Mammary epithelial cell (primary cell): ENCODE measurements at regions of chr1 and their contacts with region 1.

Region 1: GRCh38 chr1:55893155-55893554 is 678.0 kb upstream of the USP24 start:
- DNase-seq: peak; percentile 55
- H3K4me3 ChIP-seq: no peak overlapping the region
- H3K27ac ChIP-seq: no peak overlapping the region
- H3K4me1 ChIP-seq: no peaks in the 10 kb centered on the region
- H3K27me3 ChIP-seq: no peaks in the 10 kb centered on the region
- CTCF ChIP-seq: peak; percentile 43 to 59

Region 2: DNA sequence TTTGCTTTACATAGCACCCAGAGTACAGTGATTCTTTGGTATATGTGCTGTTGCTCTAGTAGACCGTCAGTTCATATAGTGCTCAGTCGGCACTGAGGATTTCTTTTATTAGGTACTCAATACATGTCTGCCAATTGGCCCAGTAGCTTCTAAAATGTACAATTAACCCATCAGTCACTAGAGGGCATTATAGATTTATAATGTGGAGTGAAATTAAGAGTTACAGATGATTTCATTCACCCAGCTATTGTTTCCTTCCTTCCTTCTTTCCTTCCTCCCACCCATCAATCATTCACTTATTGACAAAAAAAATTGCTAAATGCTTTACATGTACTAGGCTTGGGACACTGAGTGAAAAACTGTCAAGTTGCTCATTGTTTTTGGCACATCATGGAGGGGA is 414.4 kb before region 1 on chr1:
- CTCF ChIA-PET with region 1: no interaction called
- dilution Hi-C with region 1: no loop called
- in situ Hi-C with region 1: loop called in 1 of 2 experiments (anchors 25 kb)
- intact Hi-C with region 1: loop called (anchors 1 kb)
- DNase-seq: peak; percentile 21
- H3K4me3 ChIP-seq: no peak overlapping the region
- H3K27ac ChIP-seq: no peak overlapping the region
- H3K4me1 ChIP-seq: peaks cover 3% of the 10 kb centered on the region
- H3K27me3 ChIP-seq: no peaks in the 10 kb centered on the region
- CTCF ChIP-seq: peak; percentile 43

Region 3: DNA sequence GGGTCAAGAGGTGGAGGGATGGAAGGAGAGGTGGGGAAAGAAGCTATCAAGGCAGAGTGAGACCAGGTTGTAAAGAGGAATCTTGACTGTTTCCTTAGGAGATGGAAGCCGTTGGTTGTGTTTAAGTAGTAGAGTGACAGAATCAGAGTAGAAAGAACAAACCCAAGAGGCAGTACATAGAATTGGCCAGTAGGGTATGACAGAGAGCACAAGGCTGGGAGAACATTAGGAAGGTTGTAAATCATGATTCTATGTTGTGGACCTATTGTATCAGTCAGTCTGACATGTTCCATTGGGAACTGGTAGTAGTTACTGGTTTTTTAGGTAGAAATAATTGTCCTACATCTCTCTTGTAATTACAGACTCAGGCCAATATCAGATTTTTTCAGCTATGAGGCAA is 191.1 kb before region 1 on chr1:
- CTCF ChIA-PET with region 1: no interaction called
- dilution Hi-C with region 1: no loop called
- in situ Hi-C with region 1: no loop called
- intact Hi-C with region 1: loop called (anchors 1 kb)
- DNase-seq: peak; percentile 26
- H3K4me3 ChIP-seq: no peak overlapping the region
- H3K27ac ChIP-seq: no peak overlapping the region
- H3K4me1 ChIP-seq: no peaks in the 10 kb centered on the region
- H3K27me3 ChIP-seq: no peaks in the 10 kb centered on the region
- CTCF ChIP-seq: peak; percentile 95 to 96